Psoas muscle (tissue), 8 donors: ENCODE measurements at regions of chrX and their contacts with region 1.

Region 1: GRCh38 chrX:67543818-67544217 is at the start of gene AR:
- DNase-seq: peak; percentile 74 to 81
- ATAC-seq: peak; percentile 59 to 73 (median 68)
- H3K4me3 ChIP-seq: peak within 1 kb of the TSS; percentile 69
- H3K27ac ChIP-seq: peak within 1 kb of the TSS; percentile 69
- H3K4me1 ChIP-seq: no peaks in the 10 kb centered on the region
- H3K27me3 ChIP-seq: peaks cover 0 to 4% (median 0%) of the 10 kb centered on the region in 3 donors
- CTCF ChIP-seq: no peak
- total RNA-seq, gene AR: 7.3 to 16.0 (median 11.3) TPM

Region 2: DNA sequence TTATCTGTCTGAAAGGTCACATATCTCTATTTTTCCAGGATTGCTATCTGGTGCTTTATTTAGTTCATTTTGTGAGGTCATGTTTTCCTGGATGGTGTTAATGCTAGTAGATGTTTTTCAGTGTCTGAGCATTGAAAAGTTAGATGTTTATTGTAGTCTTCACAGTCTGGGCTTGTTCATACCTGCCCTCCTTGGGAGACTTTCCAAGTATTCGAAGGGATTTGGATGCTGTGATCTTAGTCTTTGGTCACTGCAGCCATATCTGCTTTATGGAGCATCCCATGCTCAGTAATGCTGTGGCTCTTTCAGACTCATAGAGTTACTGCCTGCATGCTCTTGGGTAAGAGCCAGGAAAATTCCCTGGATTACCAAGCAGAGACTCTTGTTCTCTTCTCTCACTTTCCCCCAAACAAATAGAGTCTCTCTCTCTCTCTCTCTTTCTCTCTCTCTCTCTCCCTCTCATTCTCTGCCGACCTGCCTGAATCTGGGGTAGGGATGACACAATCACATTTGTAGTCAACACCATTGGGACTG is 130.0 kb after region 1 on chrX:
- intact Hi-C with region 1: no loop called
- DNase-seq: no peak
- ATAC-seq: peak in 1 of 4 donors; percentile 27
- H3K4me3 ChIP-seq: no peak overlapping the region
- H3K27ac ChIP-seq: no peak overlapping the region
- H3K4me1 ChIP-seq: peaks cover 11% of the 10 kb centered on the region
- H3K27me3 ChIP-seq: peaks cover 0 to 4% (median 0%) of the 10 kb centered on the region in 3 donors
- CTCF ChIP-seq: no peak

Region 3: DNA sequence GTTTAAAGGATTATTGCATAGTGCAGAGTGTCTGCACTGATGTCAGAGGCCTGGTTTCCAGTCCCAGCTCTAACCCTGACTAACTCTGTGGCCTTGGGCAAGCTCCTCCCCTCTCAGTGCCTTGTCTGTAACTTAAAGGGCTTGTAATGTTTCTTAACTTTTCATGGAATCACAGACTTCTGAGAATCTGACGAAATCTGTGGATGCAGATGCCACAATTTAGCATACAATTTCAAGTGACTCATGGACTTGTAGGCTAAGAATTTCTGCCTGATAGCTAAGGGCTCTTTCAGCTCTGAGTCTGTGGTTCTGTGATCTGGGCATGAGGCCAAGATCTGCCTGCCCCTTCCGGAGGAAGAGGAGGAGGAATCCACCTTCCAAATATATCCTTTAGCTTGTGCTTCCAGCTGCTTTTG is 236.9 kb after region 1 on chrX:
- intact Hi-C with region 1: loop called in 1 of 2 experiments (anchors 5 kb)
- DNase-seq: peak; percentile 74 to 86
- ATAC-seq: peak; percentile 77 to 87 (median 82)
- H3K4me3 ChIP-seq: peak overlapping the region; percentile 31
- H3K27ac ChIP-seq: peak overlapping the region; percentile 77
- H3K4me1 ChIP-seq: peaks cover 24% of the 10 kb centered on the region
- H3K27me3 ChIP-seq: no peaks in the 10 kb centered on the region
- CTCF ChIP-seq: no peak